ENCODE measurements at regions of chr6 and their contacts with region 1.

Region 1: GRCh38 chr6:132962936-132963868 is 148.8 kb downstream of the RPS12 start:
- DNase-seq: peak; percentile 38 to 59
- ATAC-seq: peak; percentile 91 to 97
- H3K4me3 ChIP-seq: no peak overlapping the region
- H3K27ac ChIP-seq: no peak overlapping the region
- H3K4me1 ChIP-seq: peaks cover 13% of the 10 kb centered on the region
- CTCF ChIP-seq: peak; percentile 78
- EP300 ChIP-seq: no peak
- POLR2A ChIP-seq: no peak
- RAD21 ChIP-seq: peak; percentile 81 to 86

Region 2: GRCh38 chr6:132952031-132952867 is 11.0 kb before region 1 on chr6:
- CTCF ChIA-PET with region 1: interaction called, 26 read pairs
- POLR2A ChIA-PET with region 1: no interaction called
- DNase-seq: peak in 1 of 2 experiments; percentile 13
- ATAC-seq: no peak
- H3K4me3 ChIP-seq: no peak overlapping the region
- H3K27ac ChIP-seq: no peak overlapping the region
- H3K4me1 ChIP-seq: peaks cover 9% of the 10 kb centered on the region; the same call in 1 of the 3 replicates
- CTCF ChIP-seq: no peak
- EP300 ChIP-seq: no peak
- POLR2A ChIP-seq: no peak
- RAD21 ChIP-seq: no peak

Region 3: GRCh38 chr6:133040094-133040802 is 77.0 kb after region 1 on chr6:
- CTCF ChIA-PET with region 1: interaction called, 12 read pairs
- POLR2A ChIA-PET with region 1: no interaction called
- DNase-seq: peak; percentile 4 to 34
- ATAC-seq: peak; percentile 70 to 75; a peak in 4 of 6 replicates
- H3K4me3 ChIP-seq: no peak overlapping the region
- H3K27ac ChIP-seq: no peak overlapping the region
- H3K4me1 ChIP-seq: peaks cover 2% of the 10 kb centered on the region; the same call in 1 of the 3 replicates
- CTCF ChIP-seq: peak; percentile 47
- EP300 ChIP-seq: no peak
- POLR2A ChIP-seq: no peak
- RAD21 ChIP-seq: peak; percentile 32 to 34; a peak in 4 of 5 replicates

Region 4: DNA sequence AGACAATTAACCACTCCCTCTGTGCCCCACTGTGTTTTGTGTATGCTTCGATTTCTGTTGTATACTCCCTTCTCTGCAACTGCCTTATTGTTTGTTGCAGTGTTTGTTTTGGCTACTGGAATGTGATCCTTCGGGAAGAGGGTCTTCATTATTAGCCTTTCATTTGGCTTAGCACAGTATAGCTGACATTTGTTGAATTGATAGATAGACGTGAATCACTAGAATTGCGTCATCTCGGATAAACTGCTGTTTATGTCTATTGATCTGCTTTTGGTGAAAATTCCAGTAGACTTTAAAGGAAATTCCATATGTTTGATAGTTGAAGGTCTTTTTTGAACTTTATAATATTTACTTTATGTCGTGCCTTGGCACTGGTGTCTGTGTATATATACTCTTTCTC is 88.0 kb after region 1 on chr6:
- CTCF ChIA-PET with region 1: no interaction called
- POLR2A ChIA-PET with region 1: no interaction called
- DNase-seq: no peak
- ATAC-seq: no peak
- H3K4me3 ChIP-seq: no peak overlapping the region
- H3K27ac ChIP-seq: no peak overlapping the region
- H3K4me1 ChIP-seq: no peaks in the 10 kb centered on the region
- CTCF ChIP-seq: no peak
- EP300 ChIP-seq: no peak
- POLR2A ChIP-seq: no peak
- RAD21 ChIP-seq: no peak

Region 5: DNA sequence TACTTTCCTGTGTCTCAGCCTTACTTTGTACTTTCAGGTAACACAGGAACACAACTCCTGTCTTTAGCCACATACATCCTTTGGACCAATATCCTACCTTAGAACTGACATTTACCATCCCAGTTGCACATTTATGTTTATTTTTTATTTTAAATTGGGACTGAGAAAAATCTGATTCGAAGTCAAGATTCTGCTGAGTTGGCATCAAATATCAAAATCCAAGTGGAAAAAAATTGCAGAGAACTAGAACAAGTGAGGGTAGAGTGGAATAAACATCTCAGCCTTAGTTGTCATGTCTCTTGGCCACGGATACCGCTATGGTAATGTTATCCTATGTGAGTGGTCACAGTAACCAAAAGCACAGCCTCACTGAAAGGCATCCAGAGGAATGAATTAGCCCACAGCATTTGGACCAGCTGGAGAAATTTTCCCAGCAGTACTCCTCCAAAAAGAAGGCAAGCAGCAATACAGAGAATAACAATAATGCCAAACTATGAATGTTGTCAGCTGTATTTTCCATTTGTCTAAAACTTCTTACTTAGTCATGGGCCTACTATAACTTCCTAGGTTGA is 260.3 kb after region 1 on chr6:
- CTCF ChIA-PET with region 1: no interaction called
- POLR2A ChIA-PET with region 1: no interaction called
- DNase-seq: no peak
- ATAC-seq: no peak
- H3K4me3 ChIP-seq: no peak overlapping the region
- H3K27ac ChIP-seq: no peak overlapping the region
- H3K4me1 ChIP-seq: no peaks in the 10 kb centered on the region
- CTCF ChIP-seq: no peak
- EP300 ChIP-seq: no peak
- POLR2A ChIP-seq: no peak
- RAD21 ChIP-seq: no peak